ENCODE measurements at regions of chr15 and their contacts with region 1.

Region 1: GRCh38 chr15:71443538-71443937 is 328.3 kb downstream of the THSD4 start:
- DNase-seq: peak; percentile 6 to 16 (median 7)
- H3K4me3 ChIP-seq: no peak overlapping the region
- H3K4me3 Mint-ChIP-seq: no peak overlapping the region
- H3K27ac ChIP-seq: no peak overlapping the region
- H3K27ac Mint-ChIP-seq: no peak overlapping the region
- H3K4me1 ChIP-seq: peaks cover 10 to 14% of the 10 kb centered on the region in 2 donors
- H3K4me1 Mint-ChIP-seq: peaks cover 18% of the 10 kb centered on the region
- H3K27me3 ChIP-seq: peaks cover 0 to 2% of the 10 kb centered on the region in 2 donors
- H3K27me3 Mint-ChIP-seq: peaks cover 0 to 10% (median 3%) of the 10 kb centered on the region in 3 donors
- CTCF ChIP-seq: peak; percentile 88

Region 2: GRCh38 chr15:71114896-71115554 is 328.5 kb before region 1 on chr15 and contains the start of gene THSD4:
- intact Hi-C with region 1: loop called in 1 of 2 experiments (anchors 5 kb)
- DNase-seq: peak; percentile 20 to 51 (median 23)
- H3K4me3 ChIP-seq: peak within 1 kb of the TSS in 1 of 3 experiments; percentile 48
- H3K4me3 Mint-ChIP-seq: peak within 1 kb of the TSS; percentile 73 to 87
- H3K27ac ChIP-seq: no peak within 1 kb of the TSS
- H3K27ac Mint-ChIP-seq: no peak within 1 kb of the TSS
- H3K4me1 ChIP-seq: peaks cover 5 to 6% of the 10 kb centered on the region in 2 donors
- H3K4me1 Mint-ChIP-seq: peaks cover 11% of the 10 kb centered on the region
- H3K27me3 ChIP-seq: peaks cover 23 to 47% of the 10 kb centered on the region in 2 donors
- H3K27me3 Mint-ChIP-seq: peaks cover 42 to 61% (median 50%) of the 10 kb centered on the region in 3 donors
- CTCF ChIP-seq: peak; percentile 86
- polyA plus RNA-seq, gene THSD4: not detected

Region 3: DNA sequence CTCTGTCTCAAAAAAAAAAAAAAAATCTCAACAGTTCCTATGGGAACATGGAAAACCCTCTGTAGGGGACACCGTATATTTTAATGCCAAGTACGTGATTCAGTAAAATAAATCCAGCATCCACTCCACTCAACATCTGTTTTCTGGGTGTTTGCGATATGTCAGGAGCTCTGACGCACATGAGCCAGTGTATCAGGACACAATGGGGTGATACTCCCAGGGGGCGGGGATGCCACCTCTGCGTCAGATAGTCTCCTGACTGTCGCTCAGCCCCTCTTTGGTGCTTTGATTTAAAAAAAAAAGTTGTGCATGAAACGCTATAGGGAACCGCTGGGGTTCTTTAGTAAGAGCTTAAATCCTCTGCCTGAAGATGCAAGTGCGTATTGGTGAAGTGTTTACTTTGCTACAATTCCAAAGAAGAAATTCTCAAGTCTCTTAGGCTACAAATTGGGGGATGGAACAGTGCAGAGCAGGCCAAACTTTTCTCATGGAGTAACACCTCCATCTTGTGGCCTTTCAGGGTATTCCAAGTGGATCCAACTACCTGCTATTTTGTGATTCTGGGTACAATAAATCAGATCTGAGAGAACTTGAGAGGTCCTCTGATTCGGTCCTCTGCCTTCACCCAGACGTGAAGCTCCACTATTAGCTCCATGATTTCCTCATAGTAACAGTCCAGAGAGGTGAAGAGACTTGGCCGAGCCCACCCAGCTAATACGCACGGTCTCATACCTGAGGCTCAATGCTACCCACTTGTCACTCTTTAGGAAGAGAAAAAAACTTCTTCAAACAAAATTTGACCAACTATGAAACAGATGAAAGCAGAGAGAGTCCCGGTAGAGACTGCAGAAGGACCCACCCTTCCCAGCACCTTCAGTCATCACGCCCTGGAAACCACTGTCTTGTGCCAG is 357.6 kb after region 1 on chr15:
- intact Hi-C with region 1: no loop called
- DNase-seq: peak in 2 of 3 donors; percentile 5 to 10
- H3K4me3 ChIP-seq: no peak overlapping the region
- H3K4me3 Mint-ChIP-seq: no peak overlapping the region
- H3K27ac ChIP-seq: no peak overlapping the region
- H3K27ac Mint-ChIP-seq: no peak overlapping the region
- H3K4me1 ChIP-seq: no peaks in the 10 kb centered on the region
- H3K4me1 Mint-ChIP-seq: peaks cover 2% of the 10 kb centered on the region
- H3K27me3 ChIP-seq: no peaks in the 10 kb centered on the region
- H3K27me3 Mint-ChIP-seq: peaks cover 6 to 8% (median 7%) of the 10 kb centered on the region in 3 donors
- CTCF ChIP-seq: peak; percentile 60

Measured in CD14-positive monocyte (primary cell).